ENCODE measurements at regions of chr16 and their contacts with region 1.

Region 1: GRCh38 chr16:27103954-27104353 is 37.2 kb downstream of the C16orf82 start:
- DNase-seq: peak in 1 of 2 donors; percentile 7
- H3K4me3 ChIP-seq: no peak overlapping the region
- H3K27ac ChIP-seq: no peak overlapping the region
- H3K4me1 ChIP-seq: no peaks in the 10 kb centered on the region
- H3K27me3 ChIP-seq: no peaks in the 10 kb centered on the region
- CTCF ChIP-seq: no peak
- POLR2A ChIP-seq: no peak

Region 2: DNA sequence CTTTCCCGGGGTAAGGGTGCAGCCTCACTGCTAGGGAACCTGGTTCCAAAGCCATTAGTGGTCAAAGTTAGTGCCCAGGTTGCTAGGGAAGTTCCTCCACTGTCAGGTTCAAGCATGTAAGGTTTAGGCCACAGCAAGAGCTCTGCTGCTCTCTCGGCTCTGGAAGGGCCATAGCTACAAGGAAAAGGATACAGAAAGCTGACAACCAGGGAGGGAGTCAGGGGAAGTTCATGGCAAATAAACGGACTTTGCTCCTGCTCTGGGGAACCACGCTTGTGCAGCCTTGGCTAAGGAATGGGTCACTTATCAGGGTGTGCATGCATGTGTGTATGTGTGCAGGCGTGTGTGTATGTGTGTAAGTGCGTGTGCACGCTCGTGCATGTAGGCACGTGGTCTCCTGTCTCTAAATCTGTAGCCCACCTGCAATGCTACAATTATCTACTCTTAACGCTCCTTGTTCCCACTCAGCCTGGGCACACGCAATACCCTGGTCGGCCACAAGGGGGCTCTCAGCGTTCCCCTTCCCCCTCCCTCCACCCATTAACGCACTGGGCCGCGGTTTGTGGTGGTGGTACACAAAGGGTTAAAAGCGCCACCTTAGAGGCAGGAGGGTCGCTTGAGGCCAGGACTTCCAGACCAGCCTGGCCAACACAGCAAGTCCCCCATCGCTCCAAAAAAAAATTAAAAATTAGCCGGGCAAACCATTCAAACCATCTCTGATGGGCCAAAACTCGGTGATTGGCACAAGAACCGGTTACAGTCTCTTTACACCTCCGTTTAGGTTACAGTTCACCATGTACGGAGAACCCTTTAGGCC is 51.0 kb after region 1 on chr16:
- intact Hi-C with region 1: loop called (anchors 2 kb)
- DNase-seq: no peak
- H3K4me3 ChIP-seq: no peak overlapping the region
- H3K27ac ChIP-seq: no peak overlapping the region
- H3K4me1 ChIP-seq: no peaks in the 10 kb centered on the region
- H3K27me3 ChIP-seq: no peaks in the 10 kb centered on the region
- CTCF ChIP-seq: peak; percentile 74 to 90 (median 90)
- POLR2A ChIP-seq: no peak

Measured in breast epithelium (tissue), 4 donors.